ENCODE measurements at regions of chr4 and their contacts with region 1.

Region 1: DNA sequence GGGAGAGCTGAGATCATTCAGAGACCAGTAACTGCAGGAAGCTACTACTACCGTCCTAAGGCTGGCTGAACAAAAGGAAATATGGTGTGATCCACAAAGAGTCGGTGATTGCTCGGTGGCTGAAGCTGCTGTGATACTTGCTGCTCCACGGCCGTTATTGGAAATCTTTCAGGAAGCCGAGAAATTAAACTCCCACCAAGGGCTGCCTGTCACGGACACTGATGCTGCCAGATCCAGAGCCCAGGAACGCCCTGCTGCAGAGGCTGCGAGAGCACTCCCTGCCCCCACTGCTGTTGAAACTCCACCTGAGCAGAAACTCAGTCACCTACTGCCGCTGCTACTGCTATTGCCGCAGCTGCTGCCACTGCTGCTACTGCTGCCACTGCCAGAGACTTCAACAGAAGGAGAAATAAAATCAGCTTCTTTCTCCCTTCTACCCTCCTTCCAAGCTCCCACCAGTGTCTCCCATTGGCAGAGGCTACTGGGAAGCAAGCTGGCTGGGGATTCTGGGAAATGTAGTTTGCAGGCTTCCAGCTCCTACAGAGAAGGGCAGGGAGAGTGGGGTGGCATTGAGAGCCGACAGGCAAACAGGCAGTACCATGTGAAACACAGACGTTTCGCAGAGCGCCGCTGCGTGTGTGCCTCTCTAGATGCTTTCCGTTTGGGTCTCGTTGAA is 126.0 kb upstream of the ENPP6 start:
- DNase-seq: peak; percentile 39
- ATAC-seq: peak; percentile 50
- H3K4me3 Mint-ChIP-seq: peak overlapping the region; percentile 86
- H3K27ac Mint-ChIP-seq: peak overlapping the region; percentile 83
- H3K4me1 Mint-ChIP-seq: peaks cover 73% of the 10 kb centered on the region
- H3K27me3 Mint-ChIP-seq: no peaks in the 10 kb centered on the region
- CTCF ChIP-seq: no peak

Region 2: GRCh38 chr4:184310171-184310567 is 33.5 kb before region 1 on chr4:
- CTCF ChIA-PET with region 1: interaction called, 3 read pairs
- POLR2A ChIA-PET with region 1: interaction called, 33 read pairs
- intact Hi-C with region 1: loop called (anchors 1 kb)
- DNase-seq: no peak
- ATAC-seq: peak; percentile 23
- H3K4me3 Mint-ChIP-seq: no peak overlapping the region
- H3K27ac Mint-ChIP-seq: peak overlapping the region; percentile 51
- H3K4me1 Mint-ChIP-seq: peaks cover 61% of the 10 kb centered on the region
- H3K27me3 Mint-ChIP-seq: no peaks in the 10 kb centered on the region
- CTCF ChIP-seq: no peak

Region 3: GRCh38 chr4:184329659-184330400 is 13.8 kb before region 1 on chr4:
- CTCF ChIA-PET with region 1: interaction called, 24 read pairs
- POLR2A ChIA-PET with region 1: interaction called, 78 read pairs
- intact Hi-C with region 1: loop called (anchors 1 kb)
- DNase-seq: no peak
- ATAC-seq: peak; percentile 26
- H3K4me3 Mint-ChIP-seq: peak overlapping the region; percentile 47
- H3K27ac Mint-ChIP-seq: peak overlapping the region; percentile 97
- H3K4me1 Mint-ChIP-seq: peaks cover 78% of the 10 kb centered on the region
- H3K27me3 Mint-ChIP-seq: no peaks in the 10 kb centered on the region
- CTCF ChIP-seq: no peak

Region 4: GRCh38 chr4:184364100-184364921 is 20.7 kb after region 1 on chr4:
- CTCF ChIA-PET with region 1: no interaction called
- POLR2A ChIA-PET with region 1: interaction called, 5 read pairs
- intact Hi-C with region 1: loop called (anchors 2 kb)
- DNase-seq: no peak
- ATAC-seq: no peak
- H3K4me3 Mint-ChIP-seq: no peak overlapping the region
- H3K27ac Mint-ChIP-seq: no peak overlapping the region
- H3K4me1 Mint-ChIP-seq: peaks cover 26% of the 10 kb centered on the region
- H3K27me3 Mint-ChIP-seq: no peaks in the 10 kb centered on the region
- CTCF ChIP-seq: no peak